ENCODE measurements at regions of chr4 and their contacts with region 1.

Region 1: DNA sequence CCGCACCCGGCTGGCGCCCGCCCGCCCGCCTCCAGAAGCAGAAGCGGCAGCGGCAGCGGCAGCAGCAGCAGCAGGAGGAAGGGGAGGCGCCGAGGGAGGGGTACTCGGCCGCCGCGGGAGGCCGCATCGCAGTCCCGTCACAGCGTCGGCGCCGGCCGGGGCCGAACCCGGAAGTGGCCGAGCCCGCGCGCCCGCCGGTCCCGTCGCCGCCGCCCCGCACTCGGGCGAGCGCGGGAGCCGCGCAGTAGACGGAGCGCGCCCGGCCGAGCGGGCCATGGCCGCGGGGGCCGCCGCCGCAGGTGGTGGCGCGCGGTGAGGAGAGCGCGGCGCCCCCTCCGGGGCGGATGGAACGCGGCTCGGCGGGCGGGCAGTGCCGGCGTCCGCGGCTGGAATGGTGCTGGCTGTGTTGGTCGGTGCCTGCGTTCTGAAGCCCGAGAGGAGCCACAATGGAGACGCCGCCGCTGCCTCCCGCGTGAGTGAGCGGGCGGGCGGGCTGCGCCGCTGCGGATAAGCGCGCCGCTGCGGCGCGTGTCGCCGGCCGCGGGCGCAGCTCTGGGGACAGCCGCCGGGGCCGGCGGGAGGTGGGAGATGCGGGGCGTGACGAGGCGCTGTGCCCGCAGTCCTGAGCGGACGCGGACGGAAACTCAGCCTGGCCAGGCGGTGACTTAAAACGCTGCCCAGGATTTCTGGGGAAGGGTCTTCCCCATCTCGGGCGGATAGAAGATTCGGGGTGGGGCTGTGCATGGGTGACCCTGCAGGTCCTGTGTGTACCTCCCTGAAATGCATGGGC is at the start of gene KLHL2:
- DNase-seq: peak; percentile 59
- H3K4me3 ChIP-seq: peak within 1 kb of the TSS; percentile 82 to 91 (median 89)
- H3K27ac ChIP-seq: peak within 1 kb of the TSS; percentile 59
- H3K4me1 ChIP-seq: peaks cover 53% of the 10 kb centered on the region
- H3K27me3 ChIP-seq: no peaks in the 10 kb centered on the region
- CTCF ChIP-seq: no peak
- total RNA-seq, gene KLHL2: 23.7 to 24.2 TPM

Region 2: GRCh38 chr4:164813554-164813953 is 394.1 kb before region 1 on chr4:
- CTCF ChIA-PET with region 1: no interaction called
- dilution Hi-C with region 1: no loop called
- in situ Hi-C with region 1: no loop called
- intact Hi-C with region 1: no loop called
- DNase-seq: no peak
- H3K4me3 ChIP-seq: no peak overlapping the region
- H3K27ac ChIP-seq: no peak overlapping the region
- H3K4me1 ChIP-seq: no peaks in the 10 kb centered on the region
- H3K27me3 ChIP-seq: no peaks in the 10 kb centered on the region
- CTCF ChIP-seq: no peak

Region 3: GRCh38 chr4:165288639-165289422 is 81.2 kb after region 1 on chr4:
- CTCF ChIA-PET with region 1: no interaction called
- dilution Hi-C with region 1: no loop called
- in situ Hi-C with region 1: no loop called
- intact Hi-C with region 1: loop called (anchors 5 kb)
- DNase-seq: peak; percentile 69
- H3K4me3 ChIP-seq: no peak overlapping the region
- H3K27ac ChIP-seq: no peak overlapping the region
- H3K4me1 ChIP-seq: peaks cover 10% of the 10 kb centered on the region
- H3K27me3 ChIP-seq: no peaks in the 10 kb centered on the region
- CTCF ChIP-seq: no peak

Measured in mammary epithelial cell (primary cell).